PC-9 (cell line): ENCODE measurements at regions of chr11 and their contacts with region 1.

Region 1: GRCh38 chr11:14148653-14149273 is 186.2 kb downstream of the SPON1 start:
- DNase-seq: peak in 1 of 2 experiments; percentile 49
- H3K4me3 ChIP-seq: no peak overlapping the region
- H3K27ac ChIP-seq: no peak overlapping the region
- H3K4me1 ChIP-seq: no peaks in the 10 kb centered on the region
- H3K27me3 ChIP-seq: no peaks in the 10 kb centered on the region
- CTCF ChIP-seq: peak; percentile 66

Region 2: DNA sequence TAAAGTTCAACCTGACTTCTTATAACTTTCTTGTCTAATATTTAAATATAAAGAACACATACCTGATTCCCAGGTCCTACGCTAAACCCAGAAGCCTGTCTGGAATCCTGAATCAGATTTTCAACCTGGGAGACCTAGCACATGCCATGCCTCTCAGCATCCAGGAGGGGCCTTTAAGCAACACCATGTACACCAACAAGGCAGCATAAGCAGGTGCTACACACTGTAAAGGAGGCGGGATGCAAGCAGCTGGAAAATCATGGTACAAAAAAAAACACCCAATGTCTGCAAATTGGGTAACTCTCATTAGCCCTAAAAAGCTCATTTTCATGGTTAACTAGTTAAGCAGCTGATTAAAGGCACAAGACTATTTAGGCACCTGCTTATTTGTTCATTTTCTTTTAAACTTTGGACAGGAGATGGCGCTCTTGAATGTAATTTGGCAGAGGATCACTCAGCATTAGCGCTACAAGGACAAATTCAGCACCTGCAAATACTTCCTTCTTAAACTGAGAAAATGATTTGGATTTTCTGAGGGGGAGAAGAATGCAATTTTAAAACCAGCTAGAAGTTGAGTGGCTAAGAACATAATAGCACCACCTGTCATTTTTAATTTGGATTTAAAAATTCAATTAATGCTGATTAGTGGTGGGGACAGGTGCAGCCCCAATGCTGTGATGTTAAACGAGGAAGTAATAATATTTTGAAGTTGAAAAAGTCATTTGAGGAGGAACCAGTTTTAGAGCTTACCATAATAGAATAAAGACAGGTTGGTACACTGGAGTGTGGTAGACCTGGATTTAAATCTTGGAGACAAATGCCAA is 376.3 kb before region 1 on chr11:
- CTCF ChIA-PET with region 1: interaction called, 3 read pairs
- POLR2A ChIA-PET with region 1: no interaction called
- intact Hi-C with region 1: loop called (anchors 1 kb)
- DNase-seq: peak; percentile 12 to 68
- H3K4me3 ChIP-seq: no peak overlapping the region
- H3K27ac ChIP-seq: no peak overlapping the region
- H3K4me1 ChIP-seq: no peaks in the 10 kb centered on the region
- H3K27me3 ChIP-seq: no peaks in the 10 kb centered on the region
- CTCF ChIP-seq: peak; percentile 74

Region 3: GRCh38 chr11:13874597-13874996 is 274.2 kb before region 1 on chr11:
- CTCF ChIA-PET with region 1: no interaction called
- POLR2A ChIA-PET with region 1: no interaction called
- intact Hi-C with region 1: loop called (anchors 5 kb)
- DNase-seq: no peak
- H3K4me3 ChIP-seq: no peak overlapping the region
- H3K27ac ChIP-seq: no peak overlapping the region
- H3K4me1 ChIP-seq: peaks cover 10% of the 10 kb centered on the region
- H3K27me3 ChIP-seq: no peaks in the 10 kb centered on the region
- CTCF ChIP-seq: no peak

Region 4: DNA sequence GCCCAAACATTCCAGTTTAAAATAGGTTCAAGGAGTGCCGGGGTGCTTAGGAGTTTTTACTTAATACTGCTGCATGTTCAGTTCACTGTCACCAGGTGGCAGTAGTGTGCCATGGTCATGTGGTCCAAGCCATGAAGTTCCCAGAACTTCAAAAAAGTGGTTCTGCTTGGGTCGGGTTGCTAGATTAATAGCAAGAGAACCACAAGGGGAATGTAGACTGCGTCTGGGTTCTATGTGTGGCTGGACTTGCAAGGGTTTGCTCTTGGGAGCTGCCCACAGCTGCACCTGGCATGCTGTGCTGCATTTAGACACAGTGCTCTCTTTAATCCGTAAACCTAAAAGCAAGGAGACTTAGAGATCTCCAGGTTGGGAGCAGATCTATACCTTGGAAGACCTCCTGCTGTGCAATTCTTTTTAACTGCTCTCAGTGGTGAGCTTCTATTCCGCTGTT is 192.8 kb before region 1 on chr11:
- CTCF ChIA-PET with region 1: interaction called, 3 read pairs
- POLR2A ChIA-PET with region 1: no interaction called
- intact Hi-C with region 1: loop called (anchors 5 kb)
- DNase-seq: peak in 1 of 2 experiments; percentile 19
- H3K4me3 ChIP-seq: no peak overlapping the region
- H3K27ac ChIP-seq: no peak overlapping the region
- H3K4me1 ChIP-seq: no peaks in the 10 kb centered on the region
- H3K27me3 ChIP-seq: no peaks in the 10 kb centered on the region
- CTCF ChIP-seq: peak; percentile 89

Region 5: DNA sequence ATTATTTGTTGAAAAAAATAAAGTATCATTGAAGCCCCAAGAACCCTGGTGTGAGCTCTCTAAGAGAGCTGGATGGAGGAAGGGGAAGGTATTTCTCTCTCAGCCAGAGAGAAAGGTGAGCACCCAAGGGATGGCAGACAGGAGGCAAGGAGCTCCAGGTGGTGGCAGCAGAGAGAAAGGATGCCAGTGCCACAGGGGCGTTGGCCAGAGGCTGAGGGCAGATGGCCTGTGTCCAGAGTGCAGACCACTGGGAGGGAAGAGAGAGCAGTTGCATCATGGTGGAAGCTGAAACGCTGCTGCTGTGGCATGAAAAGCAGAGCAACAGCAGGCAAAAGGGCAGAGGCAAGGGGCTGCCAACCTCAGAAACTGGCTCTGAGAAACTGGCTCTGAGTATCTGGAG is 177.8 kb before region 1 on chr11:
- CTCF ChIA-PET with region 1: interaction called, 6 read pairs
- POLR2A ChIA-PET with region 1: no interaction called
- intact Hi-C with region 1: loop called (anchors 1 kb)
- DNase-seq: peak; percentile 45 to 72
- H3K4me3 ChIP-seq: no peak overlapping the region
- H3K27ac ChIP-seq: peak overlapping the region; percentile 17; the same call in 1 of the 2 replicates
- H3K4me1 ChIP-seq: peaks cover 12% of the 10 kb centered on the region
- H3K27me3 ChIP-seq: no peaks in the 10 kb centered on the region
- CTCF ChIP-seq: peak; percentile 71

Region 6: GRCh38 chr11:14114269-14114668 is 34.5 kb before region 1 on chr11:
- CTCF ChIA-PET with region 1: no interaction called
- POLR2A ChIA-PET with region 1: no interaction called
- intact Hi-C with region 1: no loop called
- DNase-seq: no peak
- H3K4me3 ChIP-seq: no peak overlapping the region
- H3K27ac ChIP-seq: no peak overlapping the region
- H3K4me1 ChIP-seq: no peaks in the 10 kb centered on the region
- H3K27me3 ChIP-seq: no peaks in the 10 kb centered on the region
- CTCF ChIP-seq: no peak

Region 7: GRCh38 chr11:14619603-14620531 is 471.1 kb after region 1 on chr11:
- CTCF ChIA-PET with region 1: no interaction called
- POLR2A ChIA-PET with region 1: no interaction called
- intact Hi-C with region 1: no loop called
- DNase-seq: no peak
- H3K4me3 ChIP-seq: no peak overlapping the region
- H3K27ac ChIP-seq: no peak overlapping the region
- H3K4me1 ChIP-seq: no peaks in the 10 kb centered on the region
- H3K27me3 ChIP-seq: no peaks in the 10 kb centered on the region
- CTCF ChIP-seq: no peak

Region 8: DNA sequence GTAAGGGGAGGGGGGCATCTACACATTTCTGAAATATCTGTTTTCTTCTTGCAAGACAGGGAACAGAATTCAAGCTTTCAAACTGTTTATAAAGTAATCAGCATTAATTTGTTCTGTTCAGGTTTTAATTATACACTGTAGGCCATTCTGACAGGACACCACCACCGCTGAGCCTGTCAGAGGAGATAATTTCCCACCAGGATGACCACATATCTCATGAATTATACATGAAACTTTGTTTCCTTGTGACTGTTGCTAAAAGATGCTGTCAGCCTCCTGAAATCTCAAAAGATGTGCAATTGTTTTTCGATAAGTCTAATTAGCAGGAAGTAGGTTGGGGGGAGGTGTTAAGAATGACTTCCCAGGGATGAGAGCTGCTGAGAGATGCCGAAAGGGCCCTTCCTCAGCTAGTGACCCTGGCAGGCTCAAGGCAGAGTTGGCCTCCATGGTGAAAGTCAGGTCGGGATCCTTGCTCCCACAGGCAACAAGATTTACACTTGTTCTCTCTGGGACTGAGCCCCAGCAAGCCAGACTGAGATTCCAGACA is 1722.1 kb after region 1 on chr11:
- CTCF ChIA-PET with region 1: interaction called, 15 read pairs
- POLR2A ChIA-PET with region 1: no interaction called
- intact Hi-C with region 1: no loop called
- DNase-seq: no peak
- H3K4me3 ChIP-seq: no peak overlapping the region
- H3K27ac ChIP-seq: no peak overlapping the region
- H3K4me1 ChIP-seq: no peaks in the 10 kb centered on the region
- H3K27me3 ChIP-seq: no peaks in the 10 kb centered on the region
- CTCF ChIP-seq: no peak